ENCODE measurements at regions of chr1 and their contacts with region 1.

Region 1: DNA sequence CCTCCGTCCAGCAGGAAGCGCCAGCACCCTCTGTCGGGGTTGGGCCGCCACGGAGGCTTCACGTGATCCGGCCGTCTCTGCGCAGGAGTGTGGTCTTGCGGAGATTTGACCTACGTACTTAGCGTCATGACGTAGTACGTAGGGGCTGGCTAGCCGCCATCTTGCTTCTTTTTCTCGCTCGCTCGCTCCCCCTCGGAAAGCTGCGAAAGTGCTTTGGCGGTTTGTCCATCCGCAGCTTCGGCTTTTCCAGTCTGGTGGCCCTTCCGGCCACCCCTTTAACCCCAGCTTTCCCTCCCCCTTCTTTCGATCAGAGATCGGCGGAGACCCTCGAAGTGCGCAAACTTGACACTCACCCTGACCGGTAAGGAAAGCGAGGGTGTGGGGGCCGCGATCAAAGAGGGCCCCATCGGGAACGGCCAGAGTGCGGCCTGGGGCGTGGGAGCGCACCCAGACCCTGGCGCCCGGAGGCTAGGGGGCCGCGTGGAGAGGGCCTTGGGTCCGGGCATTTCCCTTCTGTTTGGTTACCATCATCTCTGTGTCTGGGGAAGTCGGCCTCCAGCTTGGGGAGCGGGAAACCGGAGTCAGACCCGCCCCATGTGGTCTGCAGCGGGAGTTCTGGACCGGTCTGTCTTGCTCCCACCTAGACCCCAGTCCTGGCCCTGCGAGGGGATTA is at the start of gene PRRC2C:
- DNase-seq: peak; percentile 91
- H3K4me3 Mint-ChIP-seq: peak within 1 kb of the TSS; percentile 98
- H3K27ac Mint-ChIP-seq: peak within 1 kb of the TSS; percentile 97
- H3K4me1 Mint-ChIP-seq: peaks cover 51% of the 10 kb centered on the region
- H3K27me3 Mint-ChIP-seq: peaks cover 1% of the 10 kb centered on the region
- total RNA-seq, gene PRRC2C: 291 and 295 TPM in 2 replicates

Region 2: GRCh38 chr1:169794530-169795416 is 1690.7 kb before region 1 on chr1 and contains the start of gene METTL18:
- intact Hi-C with region 1: loop called (anchors 10 kb)
- DNase-seq: peak; percentile 90
- H3K4me3 Mint-ChIP-seq: peak within 1 kb of the TSS; percentile 87
- H3K27ac Mint-ChIP-seq: peak within 1 kb of the TSS; percentile 86
- H3K4me1 Mint-ChIP-seq: peaks cover 55% of the 10 kb centered on the region
- H3K27me3 Mint-ChIP-seq: no peaks in the 10 kb centered on the region
- total RNA-seq, gene METTL18: 9.0 and 9.3 TPM in 2 replicates

Region 3: GRCh38 chr1:170074250-170075157 is 1411.0 kb before region 1 on chr1 and contains the start of gene KIFAP3:
- intact Hi-C with region 1: loop called (anchors 5 kb)
- DNase-seq: peak; percentile 95
- H3K4me3 Mint-ChIP-seq: peak within 1 kb of the TSS; percentile 95
- H3K27ac Mint-ChIP-seq: peak within 1 kb of the TSS; percentile 96
- H3K4me1 Mint-ChIP-seq: peaks cover 45% of the 10 kb centered on the region
- H3K27me3 Mint-ChIP-seq: no peaks in the 10 kb centered on the region
- total RNA-seq, gene KIFAP3: 12.9 and 13.5 TPM in 2 replicates

Region 4: GRCh38 chr1:171313835-171314320 is 171.6 kb before region 1 on chr1 and contains the start of gene FMO4:
- intact Hi-C with region 1: loop called (anchors 2 kb)
- DNase-seq: peak; percentile 79
- H3K4me3 Mint-ChIP-seq: peak within 1 kb of the TSS; percentile 72
- H3K27ac Mint-ChIP-seq: peak within 1 kb of the TSS; percentile 54
- H3K4me1 Mint-ChIP-seq: peaks cover 15% of the 10 kb centered on the region
- H3K27me3 Mint-ChIP-seq: no peaks in the 10 kb centered on the region
- total RNA-seq, gene FMO4: 0.39 and 1.5 TPM in 2 replicates

Region 5: GRCh38 chr1:171422511-171422910 is 63.0 kb before region 1 on chr1:
- intact Hi-C with region 1: no loop called
- DNase-seq: no peak
- H3K4me3 Mint-ChIP-seq: no peak overlapping the region
- H3K27ac Mint-ChIP-seq: no peak overlapping the region
- H3K4me1 Mint-ChIP-seq: peaks cover 15% of the 10 kb centered on the region
- H3K27me3 Mint-ChIP-seq: no peaks in the 10 kb centered on the region

Region 6: GRCh38 chr1:171515299-171515698 is 29.8 kb after region 1 on chr1:
- intact Hi-C with region 1: loop called (anchors 2 kb)
- DNase-seq: no peak
- H3K4me3 Mint-ChIP-seq: no peak overlapping the region
- H3K27ac Mint-ChIP-seq: peak overlapping the region; percentile 68
- H3K4me1 Mint-ChIP-seq: peaks cover 63% of the 10 kb centered on the region
- H3K27me3 Mint-ChIP-seq: no peaks in the 10 kb centered on the region

Region 7: DNA sequence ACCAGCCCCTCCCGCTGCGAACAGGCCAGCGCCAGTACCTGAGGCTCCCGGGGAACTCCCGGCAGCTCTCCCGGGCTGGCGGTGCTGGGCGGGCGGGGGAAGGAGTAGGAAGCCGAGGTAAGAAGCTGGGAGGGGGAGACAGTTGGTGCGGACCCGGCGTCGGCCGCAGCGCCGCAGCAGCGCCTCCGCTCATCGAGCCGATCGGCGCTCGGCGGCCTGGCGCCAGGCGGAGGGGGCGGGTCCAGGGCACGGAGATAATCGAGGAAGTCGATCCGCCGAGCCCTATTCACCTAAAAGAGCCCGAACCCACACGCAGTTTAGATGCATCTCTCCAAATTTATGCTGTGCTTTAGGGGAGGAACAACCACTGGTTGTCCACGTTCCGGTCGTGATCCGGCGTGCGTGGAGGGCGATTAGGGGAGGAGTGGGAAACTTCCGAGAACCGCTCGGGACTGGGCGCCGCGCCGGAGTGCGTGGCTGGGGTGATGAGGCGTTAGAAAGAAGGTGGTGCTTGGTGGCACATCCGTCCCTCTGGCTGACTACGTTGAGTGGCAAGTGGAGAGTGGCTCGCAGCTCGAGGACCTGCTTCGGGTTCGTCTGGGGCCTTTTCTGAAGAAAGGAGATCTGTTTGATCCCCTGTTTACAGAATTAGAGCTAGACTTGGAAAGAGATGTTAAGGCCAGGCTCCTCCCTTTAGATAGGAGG is 256.5 kb after region 1 on chr1 and contains the start of gene VAMP4:
- intact Hi-C with region 1: loop called (anchors 1 kb)
- DNase-seq: peak; percentile 80
- H3K4me3 Mint-ChIP-seq: peak within 1 kb of the TSS; percentile 99
- H3K27ac Mint-ChIP-seq: peak within 1 kb of the TSS; percentile 100
- H3K4me1 Mint-ChIP-seq: peaks cover 56% of the 10 kb centered on the region
- H3K27me3 Mint-ChIP-seq: no peaks in the 10 kb centered on the region
- total RNA-seq, gene VAMP4: 8.8 and 10.4 TPM in 2 replicates

Region 8: GRCh38 chr1:171984850-171985485 is 499.5 kb after region 1 on chr1:
- intact Hi-C with region 1: loop called (anchors 10 kb)
- DNase-seq: no peak
- H3K4me3 Mint-ChIP-seq: no peak overlapping the region
- H3K27ac Mint-ChIP-seq: no peak overlapping the region
- H3K4me1 Mint-ChIP-seq: no peaks in the 10 kb centered on the region
- H3K27me3 Mint-ChIP-seq: peaks cover 7% of the 10 kb centered on the region